Mammary epithelial cell (primary cell): ENCODE measurements at regions of chr7 and their contacts with region 1.

Region 1: DNA sequence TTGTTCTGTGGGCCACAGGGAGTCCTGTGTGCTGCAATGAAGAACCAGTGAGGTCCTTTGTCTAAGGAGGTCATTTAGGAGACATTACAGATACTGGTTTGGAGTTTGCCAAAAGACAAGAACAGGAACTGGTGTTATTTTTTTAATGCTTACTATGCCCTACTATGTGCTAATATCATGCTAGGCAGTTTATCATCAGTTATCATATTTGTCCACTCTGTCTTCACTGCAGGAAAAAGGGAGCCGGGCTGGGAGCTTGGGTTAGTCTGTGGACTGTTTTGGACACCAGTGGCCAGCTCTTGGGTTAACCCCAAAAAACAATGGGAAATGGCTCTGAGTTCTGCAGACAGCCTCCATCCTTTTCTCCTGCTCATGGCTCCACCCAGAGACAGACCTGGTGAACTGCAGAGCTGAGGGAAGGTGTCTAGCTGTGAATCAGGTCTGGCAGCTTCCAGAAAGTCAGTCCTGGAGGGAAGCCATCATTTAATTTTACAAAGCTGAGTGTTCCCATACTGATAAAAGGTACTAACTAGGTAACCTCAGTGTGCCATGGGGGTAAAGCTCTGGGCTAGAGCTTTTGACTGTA is 101.2 kb upstream of the ZNF746 start:
- DNase-seq: peak; percentile 44
- H3K4me3 ChIP-seq: no peak overlapping the region
- H3K27ac ChIP-seq: no peak overlapping the region
- H3K4me1 ChIP-seq: no peaks in the 10 kb centered on the region
- H3K27me3 ChIP-seq: no peaks in the 10 kb centered on the region
- CTCF ChIP-seq: peak; percentile 52 to 72

Region 2: DNA sequence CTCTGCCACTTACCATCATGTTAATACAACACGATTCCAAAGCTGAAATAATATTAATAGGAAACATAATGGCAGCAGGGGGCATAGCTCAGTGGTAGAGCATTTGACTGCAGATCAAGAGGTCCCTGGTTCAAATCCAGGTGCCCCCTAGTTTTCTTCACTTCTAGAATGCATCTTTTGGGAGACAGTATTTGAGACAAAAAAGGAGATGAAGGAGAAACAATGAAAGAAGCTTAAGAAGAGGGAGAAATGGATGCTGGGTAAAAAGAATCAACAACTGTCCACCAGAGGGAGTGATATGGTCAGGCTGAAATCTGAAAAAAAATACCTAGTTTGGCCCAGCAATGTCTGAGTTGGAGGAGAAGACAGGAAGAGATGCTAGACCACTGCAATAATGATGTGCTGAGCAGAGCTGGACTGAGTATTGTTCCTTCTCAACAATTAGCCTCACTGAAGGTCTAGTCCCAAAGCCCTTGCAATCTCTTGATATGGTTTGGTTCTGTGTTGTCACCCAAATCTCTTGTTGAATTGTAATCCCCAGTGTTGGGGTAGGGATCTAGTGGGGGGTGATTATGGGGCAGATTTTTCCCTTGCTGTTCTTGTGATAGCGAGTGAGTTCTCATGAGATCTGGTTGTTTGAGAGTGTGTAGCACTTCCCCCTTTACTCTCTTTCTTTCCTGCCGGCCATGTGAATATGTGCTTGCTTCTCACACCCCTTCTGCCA is 288.5 kb before region 1 on chr7:
- CTCF ChIA-PET with region 1: interaction called, 3 read pairs
- dilution Hi-C with region 1: no loop called
- in situ Hi-C with region 1: no loop called
- intact Hi-C with region 1: loop called (anchors 2 kb)
- DNase-seq: peak; percentile 85
- H3K4me3 ChIP-seq: no peak overlapping the region
- H3K27ac ChIP-seq: no peak overlapping the region
- H3K4me1 ChIP-seq: no peaks in the 10 kb centered on the region
- H3K27me3 ChIP-seq: no peaks in the 10 kb centered on the region
- CTCF ChIP-seq: peak; percentile 63 to 71

Region 3: DNA sequence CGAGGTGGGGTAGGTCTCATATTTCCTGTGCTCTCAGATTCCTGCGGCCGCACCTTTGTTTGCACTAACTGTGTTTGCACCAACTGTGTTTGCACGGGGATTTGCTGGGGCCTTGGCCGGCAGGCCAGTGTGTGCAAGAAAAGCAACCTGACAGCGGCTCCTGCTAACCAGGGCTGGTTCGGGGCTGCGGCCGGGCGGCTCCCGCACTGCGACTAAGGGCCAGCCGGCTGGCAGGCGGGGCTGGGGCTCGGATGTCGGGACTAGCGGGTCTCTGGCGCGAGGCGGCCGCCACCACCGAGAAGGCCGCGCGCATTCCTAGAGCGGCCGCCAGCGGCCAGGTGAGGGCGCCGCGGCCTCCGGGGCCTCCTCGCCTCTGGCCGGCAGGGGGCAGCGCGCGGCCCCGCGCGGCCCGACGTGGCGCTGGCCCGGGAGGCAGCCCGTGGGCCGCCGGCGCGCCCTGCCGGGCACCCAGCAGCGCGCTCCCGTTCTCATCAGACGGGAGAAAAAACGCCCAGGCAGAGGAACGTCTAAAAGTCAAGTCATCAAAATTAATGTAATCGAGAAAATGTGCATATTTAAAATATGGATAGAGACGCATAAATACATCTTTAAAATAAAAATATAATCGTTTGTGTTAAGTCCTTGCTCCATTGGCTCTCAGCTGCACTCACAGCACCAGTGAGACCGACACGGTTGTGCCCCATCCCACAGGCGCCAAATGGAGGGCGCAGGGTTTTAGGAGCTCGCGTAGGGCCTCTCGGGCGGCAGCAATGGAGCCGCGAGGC is 176.5 kb before region 1 on chr7:
- CTCF ChIA-PET with region 1: no interaction called
- dilution Hi-C with region 1: no loop called
- in situ Hi-C with region 1: no loop called
- intact Hi-C with region 1: loop called (anchors 1 kb)
- DNase-seq: peak; percentile 64
- H3K4me3 ChIP-seq: peak overlapping the region; percentile 47 to 56 (median 50)
- H3K27ac ChIP-seq: no peak overlapping the region
- H3K4me1 ChIP-seq: peaks cover 4% of the 10 kb centered on the region
- H3K27me3 ChIP-seq: no peaks in the 10 kb centered on the region
- CTCF ChIP-seq: peak; percentile 49 to 66

Region 4: GRCh38 chr7:149559711-149560110 is 39.1 kb before region 1 on chr7:
- CTCF ChIA-PET with region 1: no interaction called
- dilution Hi-C with region 1: no loop called
- in situ Hi-C with region 1: no loop called
- intact Hi-C with region 1: loop called (anchors 5 kb)
- DNase-seq: peak; percentile 45
- H3K4me3 ChIP-seq: no peak overlapping the region
- H3K27ac ChIP-seq: peak overlapping the region; percentile 55
- H3K4me1 ChIP-seq: peaks cover 41% of the 10 kb centered on the region
- H3K27me3 ChIP-seq: no peaks in the 10 kb centered on the region
- CTCF ChIP-seq: no peak